Naive thymus-derived CD4-positive, alpha-beta T cell (primary cell): ENCODE measurements at regions of chr12 and their contacts with region 1.

Region 1: DNA sequence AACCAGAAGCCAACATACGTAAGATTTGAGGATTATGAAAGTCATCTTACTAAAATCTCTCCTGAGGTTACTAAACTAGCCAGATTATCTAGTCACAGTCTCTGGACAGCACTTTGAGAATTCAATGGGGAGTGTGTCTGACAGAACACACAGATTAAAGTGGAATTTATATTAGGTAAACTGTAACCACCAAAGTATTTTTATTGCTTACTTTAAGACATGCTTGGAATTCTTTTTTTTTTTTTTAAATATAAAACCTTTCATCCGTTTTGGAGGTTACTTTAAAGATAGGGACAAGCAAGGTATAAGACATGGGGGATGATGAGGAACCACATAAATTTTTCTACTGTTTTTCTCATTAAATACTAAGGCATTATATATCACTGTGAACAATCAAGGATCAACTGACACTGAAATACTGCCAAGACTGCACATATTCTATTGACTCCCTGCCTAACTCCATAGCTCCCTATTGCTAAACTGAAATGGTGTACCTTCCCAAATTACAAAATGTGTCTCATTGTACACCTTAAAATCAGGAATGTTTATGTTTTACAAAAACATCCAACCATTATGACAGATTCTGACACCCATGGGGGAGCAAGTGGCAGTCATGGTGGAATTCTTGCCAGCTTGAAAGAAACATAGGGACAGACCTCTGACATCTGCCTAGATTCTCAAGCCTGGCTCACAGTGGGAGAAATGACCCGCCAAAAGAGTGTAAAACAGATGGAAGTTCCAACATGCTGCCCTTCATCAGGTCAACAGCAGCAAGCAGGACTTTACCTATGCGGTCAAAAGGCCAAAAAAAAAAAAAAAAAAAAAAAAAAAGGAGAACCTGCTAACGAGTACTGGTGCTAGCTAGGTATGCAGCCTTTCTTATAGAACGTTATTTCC is 239.3 kb downstream of the MED13L start:
- DNase-seq: no peak
- ATAC-seq: no peak
- H3K4me3 ChIP-seq: no peak overlapping the region
- H3K4me3 Mint-ChIP-seq: no peak overlapping the region
- H3K27ac ChIP-seq: no peak overlapping the region
- H3K27ac Mint-ChIP-seq: no peak overlapping the region
- H3K4me1 ChIP-seq: no peaks in the 10 kb centered on the region
- H3K4me1 Mint-ChIP-seq: peaks cover 0 to 57% (median 26%) of the 10 kb centered on the region in 7 donors
- H3K27me3 ChIP-seq: no peaks in the 10 kb centered on the region
- H3K27me3 Mint-ChIP-seq: no peaks in the 10 kb centered on the region

Region 2: GRCh38 chr12:115660211-115660805 is 377.9 kb before region 1 on chr12:
- CTCF ChIA-PET with region 1: no interaction called
- POLR2A ChIA-PET with region 1: no interaction called
- intact Hi-C with region 1: no loop called
- DNase-seq: no peak
- ATAC-seq: no peak
- H3K4me3 ChIP-seq: no peak overlapping the region
- H3K4me3 Mint-ChIP-seq: no peak overlapping the region
- H3K27ac ChIP-seq: no peak overlapping the region
- H3K27ac Mint-ChIP-seq: no peak overlapping the region
- H3K4me1 ChIP-seq: no peaks in the 10 kb centered on the region
- H3K4me1 Mint-ChIP-seq: no peaks in the 10 kb centered on the region
- H3K27me3 ChIP-seq: peaks cover 0 to 3% of the 10 kb centered on the region in 2 donors
- H3K27me3 Mint-ChIP-seq: peaks cover 0 to 43% (median 21%) of the 10 kb centered on the region in 5 donors

Region 3: DNA sequence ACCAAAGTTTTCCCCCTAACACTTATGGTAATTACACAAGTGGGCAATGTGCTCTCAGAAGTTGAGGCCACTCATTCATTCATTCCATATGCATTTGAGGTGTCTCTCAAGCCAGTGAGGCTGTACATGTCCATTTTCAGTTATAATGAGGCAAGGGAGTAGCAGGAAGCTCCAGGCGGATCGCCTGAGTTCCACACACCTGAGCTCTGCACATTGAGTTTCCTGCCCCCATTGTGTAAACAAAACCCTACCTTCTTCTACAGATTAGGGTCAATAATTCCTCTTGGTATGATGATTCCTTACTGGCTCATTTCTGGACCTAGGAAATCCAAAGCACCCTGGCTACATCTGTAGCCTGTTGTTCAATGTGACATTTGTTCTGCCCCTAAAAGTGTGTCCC is 316.0 kb before region 1 on chr12:
- CTCF ChIA-PET with region 1: no interaction called
- POLR2A ChIA-PET with region 1: no interaction called
- intact Hi-C with region 1: no loop called
- DNase-seq: no peak
- ATAC-seq: no peak
- H3K4me3 ChIP-seq: no peak overlapping the region
- H3K4me3 Mint-ChIP-seq: no peak overlapping the region
- H3K27ac ChIP-seq: no peak overlapping the region
- H3K27ac Mint-ChIP-seq: no peak overlapping the region
- H3K4me1 ChIP-seq: no peaks in the 10 kb centered on the region
- H3K4me1 Mint-ChIP-seq: no peaks in the 10 kb centered on the region
- H3K27me3 ChIP-seq: no peaks in the 10 kb centered on the region
- H3K27me3 Mint-ChIP-seq: peaks cover 0 to 21% (median 0%) of the 10 kb centered on the region in 5 donors

Region 4: DNA sequence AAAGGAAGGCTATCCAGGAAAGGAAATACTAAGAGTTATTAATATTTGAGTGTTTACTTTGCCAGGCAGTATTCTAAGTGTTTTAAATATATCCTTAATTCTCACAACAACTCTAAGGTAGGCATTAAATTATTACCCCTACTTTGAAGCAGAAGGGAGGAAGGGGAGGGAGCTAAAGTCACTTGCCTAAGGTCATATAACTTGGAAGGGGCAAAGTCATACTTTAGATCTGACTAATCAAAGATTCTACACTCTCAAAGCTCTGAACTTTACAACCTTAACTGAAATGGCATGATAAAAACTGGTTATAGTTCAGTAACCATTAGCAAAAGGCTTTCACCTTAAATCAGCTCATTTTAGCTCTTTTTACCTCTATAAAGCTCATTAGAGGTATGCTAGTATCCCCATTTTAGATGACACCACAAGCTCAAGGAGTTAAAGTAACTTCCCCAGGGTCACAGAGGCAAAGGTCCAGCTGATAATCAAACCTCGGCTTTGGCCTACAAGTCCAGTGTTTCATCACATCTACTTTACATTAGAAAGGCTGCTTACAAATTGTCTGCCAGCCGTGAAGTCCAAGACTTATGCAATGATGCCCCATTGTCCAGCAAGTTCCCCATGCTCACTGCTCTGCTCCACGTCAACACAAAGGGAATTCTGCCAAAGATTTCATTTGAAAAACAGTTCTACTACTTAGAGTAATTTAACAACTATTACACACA is 15.5 kb after region 1 on chr12:
- CTCF ChIA-PET with region 1: no interaction called
- POLR2A ChIA-PET with region 1: interaction called, 4 read pairs
- intact Hi-C with region 1: loop called in 1 of 2 experiments (anchors 2 kb)
- DNase-seq: no peak
- ATAC-seq: peak; percentile 20
- H3K4me3 ChIP-seq: no peak overlapping the region
- H3K4me3 Mint-ChIP-seq: no peak overlapping the region
- H3K27ac ChIP-seq: no peak overlapping the region
- H3K27ac Mint-ChIP-seq: peak overlapping the region in 2 of 9 donors; percentile 7 to 21
- H3K4me1 ChIP-seq: peaks cover 0 to 7% of the 10 kb centered on the region in 2 donors
- H3K4me1 Mint-ChIP-seq: peaks cover 30 to 89% (median 77%) of the 10 kb centered on the region in 7 donors
- H3K27me3 ChIP-seq: no peaks in the 10 kb centered on the region
- H3K27me3 Mint-ChIP-seq: no peaks in the 10 kb centered on the region